GM12878 (cell line): ENCODE measurements at regions of chr5 and their contacts with region 1.

Region 1: DNA sequence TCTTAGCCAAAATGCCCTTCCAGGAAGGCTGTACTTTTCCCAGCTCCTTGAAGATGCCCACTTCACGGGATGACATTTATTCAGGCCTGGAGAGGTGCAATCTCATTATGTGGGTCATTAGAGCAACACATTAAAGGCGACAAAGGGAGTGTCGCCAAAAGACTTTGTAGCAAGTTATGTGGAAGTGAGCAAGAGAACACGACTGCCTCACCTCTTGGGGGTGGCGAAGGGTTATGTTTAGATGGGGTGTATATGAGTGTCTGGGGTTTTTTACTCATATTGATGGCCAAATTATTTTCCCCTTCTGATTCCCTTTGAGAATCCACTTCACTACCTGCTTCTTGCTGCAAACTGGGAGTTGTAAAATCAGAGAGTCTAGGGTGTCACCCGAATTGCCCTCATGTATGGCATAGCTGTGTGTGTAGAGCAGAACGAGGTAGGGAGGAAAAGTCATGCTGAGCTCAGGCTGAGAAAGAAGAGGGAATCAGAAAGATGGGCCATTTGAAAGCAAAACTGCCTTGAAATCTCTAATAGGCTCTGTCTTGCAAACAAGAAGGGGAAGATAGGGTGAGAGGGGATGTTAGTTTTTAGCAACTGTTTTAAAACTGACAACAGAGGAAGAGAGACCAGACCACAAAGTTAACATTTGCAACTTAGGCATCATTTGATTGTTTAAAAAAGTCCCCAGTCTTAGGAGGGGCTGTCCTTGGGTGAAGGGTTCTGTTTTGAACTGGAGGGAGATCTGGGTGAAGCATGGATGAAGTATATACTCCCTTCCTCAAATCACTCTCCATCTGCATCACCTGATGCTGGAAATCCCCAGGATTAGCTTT is 97.1 kb upstream of the IL12B start:
- DNase-seq: peak; percentile 73
- ATAC-seq: peak; percentile 79
- H3K4me3 ChIP-seq: peak overlapping the region; percentile 38; the same call in 1 of the 2 replicates
- H3K27ac ChIP-seq: peak overlapping the region; percentile 10; the same call in 1 of the 2 replicates
- H3K4me1 ChIP-seq: peaks cover 48% of the 10 kb centered on the region
- H3K27me3 ChIP-seq: no peaks in the 10 kb centered on the region
- CTCF ChIP-seq: no peak
- EP300 ChIP-seq: peak; percentile 68 to 82; a peak in 3 of 4 replicates
- POLR2A ChIP-seq: no peak
- RAD21 ChIP-seq: 0 out of 2 replicates have a peak, but pooled peaks have one; percentile 8

Region 2: DNA sequence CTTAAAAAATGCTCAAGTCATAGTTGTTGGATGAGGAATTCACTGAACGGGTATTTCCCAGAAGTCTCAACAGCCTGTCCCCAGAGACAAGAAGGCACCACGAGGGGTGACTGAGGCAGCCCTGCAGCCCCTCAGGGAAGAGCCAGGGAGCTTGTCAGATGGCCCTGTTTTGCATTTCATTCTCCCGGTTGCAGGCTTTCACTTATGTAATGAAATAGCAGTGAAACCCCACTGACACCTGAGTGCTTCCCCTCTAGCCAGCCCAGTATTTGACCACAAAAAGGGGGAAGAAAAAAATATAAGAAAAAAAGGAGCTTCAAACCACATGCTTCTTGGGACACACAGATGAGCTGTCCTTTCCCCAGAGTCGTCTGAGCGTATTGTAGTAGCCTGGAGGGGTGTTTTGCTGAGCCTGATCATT is 21.8 kb before region 1 on chr5:
- CTCF ChIA-PET with region 1: interaction called, 68 read pairs
- POLR2A ChIA-PET with region 1: interaction called, 21 read pairs
- RAD21 ChIA-PET with region 1: interaction called, 19 read pairs
- SMC1A ChIA-PET with region 1: interaction called, 133 read pairs
- in situ Hi-C with region 1: no loop called
- intact Hi-C with region 1: no loop called
- DNase-seq: peak; percentile 58
- ATAC-seq: peak; percentile 83
- H3K4me3 ChIP-seq: no peak overlapping the region
- H3K27ac ChIP-seq: no peak overlapping the region
- H3K4me1 ChIP-seq: peaks cover 17% of the 10 kb centered on the region
- H3K27me3 ChIP-seq: no peaks in the 10 kb centered on the region; a peak in 1 of 4 replicates
- CTCF ChIP-seq: no peak
- EP300 ChIP-seq: peak in 1 of 2 experiments; percentile 81; a peak in 1 of 4 replicates
- POLR2A ChIP-seq: no peak
- RAD21 ChIP-seq: no peak

Region 3: GRCh38 chr5:159412284-159413046 is 14.9 kb before region 1 on chr5:
- CTCF ChIA-PET with region 1: interaction called, 68 read pairs
- POLR2A ChIA-PET with region 1: interaction called, 21 read pairs
- RAD21 ChIA-PET with region 1: interaction called, 23 read pairs
- SMC1A ChIA-PET with region 1: interaction called, 133 read pairs
- in situ Hi-C with region 1: no loop called
- intact Hi-C with region 1: loop called (anchors 2 kb)
- DNase-seq: peak; percentile 62
- ATAC-seq: peak; percentile 87
- H3K4me3 ChIP-seq: no peak overlapping the region
- H3K27ac ChIP-seq: no peak overlapping the region
- H3K4me1 ChIP-seq: peaks cover 19% of the 10 kb centered on the region
- H3K27me3 ChIP-seq: no peaks in the 10 kb centered on the region
- CTCF ChIP-seq: no peak
- EP300 ChIP-seq: peak in 1 of 2 experiments; percentile 51; a peak in 1 of 4 replicates
- POLR2A ChIP-seq: no peak
- RAD21 ChIP-seq: no peak

Region 4: DNA sequence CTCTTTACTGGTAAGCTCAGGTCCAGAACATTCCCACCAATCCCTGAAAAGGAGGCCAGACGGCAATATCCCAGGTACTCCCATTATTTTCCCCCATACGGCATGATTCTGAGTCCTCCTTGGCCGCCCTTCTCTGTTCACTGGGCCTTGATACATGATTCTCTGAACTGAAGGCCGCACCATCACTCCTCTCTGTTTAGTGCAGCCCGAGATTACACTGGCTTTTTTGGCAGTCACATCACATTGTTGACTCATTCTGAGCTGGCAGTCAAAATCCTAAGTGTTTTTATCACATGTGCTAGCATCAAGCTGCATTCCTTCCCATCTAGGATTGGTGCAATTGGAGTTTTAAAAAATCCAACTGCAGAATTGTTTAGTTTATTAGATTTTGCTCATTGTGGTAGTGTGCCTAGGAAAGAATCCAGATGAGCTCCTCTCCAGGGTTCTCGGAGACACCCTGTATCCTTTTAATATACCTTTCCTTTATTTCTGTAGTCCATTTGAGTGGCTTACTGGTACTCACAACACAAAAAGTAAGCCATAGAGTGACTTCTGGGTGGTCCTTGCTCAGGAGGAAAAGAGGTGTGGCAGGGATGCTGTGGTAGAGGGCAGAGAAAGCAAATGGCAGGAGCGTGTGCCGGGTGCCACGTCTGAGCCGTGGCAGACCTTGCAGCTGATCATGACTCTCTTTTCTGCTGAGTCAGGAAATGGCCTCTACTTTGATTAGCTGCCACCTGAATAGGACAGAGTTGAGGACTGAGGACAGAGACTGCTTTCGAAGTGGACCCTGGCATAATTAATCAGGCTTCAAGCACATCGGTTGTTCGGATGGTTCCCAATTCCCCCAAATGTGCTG is 24.0 kb after region 1 on chr5:
- CTCF ChIA-PET with region 1: interaction called, 14 read pairs
- POLR2A ChIA-PET with region 1: interaction called, 16 read pairs
- RAD21 ChIA-PET with region 1: interaction called, 42 read pairs
- SMC1A ChIA-PET with region 1: interaction called, 65 read pairs
- in situ Hi-C with region 1: no loop called
- intact Hi-C with region 1: no loop called
- DNase-seq: no peak
- ATAC-seq: no peak
- H3K4me3 ChIP-seq: no peak overlapping the region
- H3K27ac ChIP-seq: no peak overlapping the region
- H3K4me1 ChIP-seq: peaks cover 31% of the 10 kb centered on the region
- H3K27me3 ChIP-seq: no peaks in the 10 kb centered on the region
- CTCF ChIP-seq: no peak
- EP300 ChIP-seq: no peak
- POLR2A ChIP-seq: no peak
- RAD21 ChIP-seq: no peak